ENCODE measurements at regions of chr11 and their contacts with region 1.

Region 1: GRCh38 chr11:123454060-123454651 is 24.1 kb downstream of the GRAMD1B start:
- DNase-seq: peak; percentile 88
- ATAC-seq: peak; percentile 87
- H3K4me3 Mint-ChIP-seq: peak overlapping the region; percentile 69
- H3K27ac Mint-ChIP-seq: peak overlapping the region; percentile 94
- H3K4me1 Mint-ChIP-seq: peaks cover 78% of the 10 kb centered on the region
- H3K27me3 Mint-ChIP-seq: no peaks in the 10 kb centered on the region

Region 2: GRCh38 chr11:122749005-122749687 is 705.0 kb before region 1 on chr11:
- CTCF ChIA-PET with region 1: no interaction called
- POLR2A ChIA-PET with region 1: no interaction called
- intact Hi-C with region 1: loop called in 1 of 2 experiments (anchors 10 kb)
- DNase-seq: peak; percentile 81
- ATAC-seq: peak; percentile 80
- H3K4me3 Mint-ChIP-seq: no peak overlapping the region
- H3K27ac Mint-ChIP-seq: no peak overlapping the region
- H3K4me1 Mint-ChIP-seq: peaks cover 29% of the 10 kb centered on the region
- H3K27me3 Mint-ChIP-seq: peaks cover 6% of the 10 kb centered on the region

Region 3: DNA sequence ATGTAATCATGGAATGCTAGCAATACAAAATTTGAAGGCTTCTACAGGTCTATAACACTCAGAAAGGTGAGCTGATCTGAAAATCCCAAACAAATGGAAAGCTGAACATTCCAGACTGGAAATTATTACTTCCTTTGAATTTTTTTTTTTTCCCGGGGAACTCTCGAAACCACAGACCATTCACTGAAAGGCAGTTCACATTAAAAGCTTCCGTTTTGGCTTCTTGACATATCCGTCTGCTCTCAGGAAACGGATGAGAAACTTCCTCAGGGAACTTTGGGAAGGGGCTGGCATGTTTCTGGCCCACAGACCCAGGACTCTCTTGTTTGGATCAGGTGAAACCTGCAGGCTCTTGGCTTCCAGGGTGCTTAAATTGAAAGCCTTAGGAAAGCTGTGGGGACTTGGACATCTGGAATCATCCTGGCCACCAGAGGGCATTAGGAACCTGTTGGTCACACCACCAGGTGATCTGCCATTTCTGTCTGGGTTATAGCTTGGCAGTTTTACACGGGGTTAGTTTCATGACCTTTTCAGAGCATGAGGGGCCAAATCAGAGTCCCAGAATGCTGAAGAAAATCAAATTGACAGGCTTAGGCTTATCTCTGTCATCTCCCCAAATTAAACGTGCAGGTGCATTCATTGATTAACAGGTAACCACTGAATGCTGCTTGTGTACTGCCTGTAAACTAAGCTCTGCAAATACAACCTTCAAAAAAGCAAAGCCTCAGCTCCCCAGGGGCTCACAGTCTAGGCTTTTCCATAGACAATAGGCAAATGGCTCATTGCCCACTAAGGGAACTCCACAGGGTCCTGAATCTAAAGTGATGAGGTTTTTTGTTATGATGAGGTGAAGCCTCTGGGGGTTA is 46.8 kb before region 1 on chr11:
- CTCF ChIA-PET with region 1: interaction called, 10 read pairs
- POLR2A ChIA-PET with region 1: no interaction called
- intact Hi-C with region 1: no loop called
- DNase-seq: peak; percentile 79
- ATAC-seq: peak; percentile 74
- H3K4me3 Mint-ChIP-seq: peak overlapping the region; percentile 33
- H3K27ac Mint-ChIP-seq: peak overlapping the region; percentile 63
- H3K4me1 Mint-ChIP-seq: peaks cover 26% of the 10 kb centered on the region
- H3K27me3 Mint-ChIP-seq: peaks cover 5% of the 10 kb centered on the region

Region 4: DNA sequence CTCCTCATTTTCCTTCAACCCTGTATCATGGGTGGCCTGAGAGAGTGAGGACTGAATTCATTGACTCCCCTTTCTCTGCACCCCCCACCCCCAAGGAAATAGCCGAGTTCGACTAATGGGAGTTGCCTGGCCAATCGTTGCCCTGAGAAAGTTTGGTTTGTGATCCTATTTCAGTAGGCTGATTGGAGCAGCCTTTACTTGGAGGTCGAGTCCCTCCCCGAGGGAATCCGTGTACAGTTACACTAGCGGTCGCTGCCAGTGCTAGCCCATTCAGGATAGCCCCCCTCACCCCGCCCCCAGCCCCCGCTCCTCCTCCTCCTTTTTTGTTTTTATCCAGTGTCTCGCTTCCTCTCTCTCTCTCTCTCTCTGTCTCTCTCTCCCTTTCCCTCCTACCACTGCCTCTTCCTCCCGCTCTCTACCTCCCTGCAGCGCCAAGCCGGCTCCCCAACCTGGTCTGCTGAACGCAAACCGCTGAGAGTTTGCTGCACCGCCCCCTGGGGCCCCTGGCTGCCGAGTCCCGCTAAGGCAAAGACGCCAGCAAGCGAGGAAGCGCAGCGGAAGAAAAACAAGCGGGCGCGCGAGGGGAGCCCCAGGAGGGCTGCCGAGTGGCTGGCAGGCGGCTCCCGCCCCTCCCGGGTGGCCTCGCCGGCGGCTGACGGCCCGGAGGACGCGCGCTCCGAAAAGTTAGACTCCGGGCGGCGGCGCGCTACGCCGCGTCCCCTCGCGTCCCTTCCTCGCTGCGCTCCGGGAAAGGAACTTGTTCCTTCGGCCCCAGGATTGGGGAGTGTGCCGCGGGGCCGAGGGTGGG is 24.0 kb before region 1 on chr11 and contains the start of gene GRAMD1B:
- CTCF ChIA-PET with region 1: interaction called, 33 read pairs
- POLR2A ChIA-PET with region 1: interaction called, 5 read pairs
- intact Hi-C with region 1: loop called (anchors 1 kb)
- DNase-seq: peak; percentile 90
- ATAC-seq: peak; percentile 68
- H3K4me3 Mint-ChIP-seq: peak within 1 kb of the TSS; percentile 76
- H3K27ac Mint-ChIP-seq: peak within 1 kb of the TSS; percentile 79
- H3K4me1 Mint-ChIP-seq: peaks cover 39% of the 10 kb centered on the region
- H3K27me3 Mint-ChIP-seq: no peaks in the 10 kb centered on the region
- total RNA-seq, gene GRAMD1B: 38.6 to 45.7 TPM

Region 5: DNA sequence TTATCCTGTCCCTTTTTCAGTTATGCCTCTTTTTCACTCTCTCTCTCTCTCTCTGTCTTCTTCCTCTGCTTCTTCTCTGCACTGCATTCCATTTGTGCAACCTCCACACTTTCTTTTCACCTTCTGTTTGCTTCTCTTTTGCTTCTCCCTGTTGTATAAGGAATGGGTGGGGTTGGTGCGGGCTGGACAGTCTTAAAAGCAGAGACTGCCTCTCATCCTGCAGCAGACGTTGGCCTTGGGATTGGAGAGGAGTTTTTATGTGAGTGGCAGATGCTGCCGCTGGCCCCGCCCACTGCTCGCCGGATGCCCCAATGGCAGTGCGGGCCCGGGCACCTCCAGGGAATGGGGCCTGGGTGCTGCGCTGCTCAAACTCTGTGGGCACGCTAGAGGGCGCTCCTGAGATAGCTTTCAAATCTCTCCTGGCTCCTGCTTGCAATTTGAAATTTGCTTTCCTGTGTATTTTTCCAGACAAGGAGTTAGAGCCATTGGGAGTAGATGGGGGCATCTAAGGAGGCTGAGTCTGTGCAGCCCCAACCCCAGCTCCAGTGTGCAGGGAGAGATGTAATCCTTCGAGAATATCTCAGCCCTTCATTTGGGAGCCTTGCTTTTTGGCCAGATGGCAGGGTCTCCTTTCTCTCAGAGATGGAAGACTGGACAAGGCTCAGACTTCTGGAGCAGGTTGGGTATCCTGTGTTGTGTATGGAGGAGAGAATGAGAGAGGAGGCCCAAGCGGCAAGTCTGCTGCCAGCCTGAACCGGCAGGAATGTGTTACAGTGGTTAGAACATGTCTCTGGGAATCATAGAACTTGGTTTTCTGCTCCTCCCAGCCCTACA is 57.1 kb after region 1 on chr11:
- CTCF ChIA-PET with region 1: no interaction called
- POLR2A ChIA-PET with region 1: no interaction called
- intact Hi-C with region 1: no loop called
- DNase-seq: peak; percentile 89
- ATAC-seq: peak; percentile 99
- H3K4me3 Mint-ChIP-seq: no peak overlapping the region
- H3K27ac Mint-ChIP-seq: no peak overlapping the region
- H3K4me1 Mint-ChIP-seq: peaks cover 8% of the 10 kb centered on the region
- H3K27me3 Mint-ChIP-seq: no peaks in the 10 kb centered on the region